ENCODE measurements at regions of chr3 and their contacts with region 1.

Region 1: GRCh38 chr3:46845791-46846623 is 17.2 kb downstream of the MYL3 start:
- DNase-seq: peak; percentile 42
- H3K4me3 Mint-ChIP-seq: peak overlapping the region; percentile 52
- H3K27ac Mint-ChIP-seq: peak overlapping the region; percentile 49
- H3K4me1 Mint-ChIP-seq: no peaks in the 10 kb centered on the region
- H3K27me3 Mint-ChIP-seq: peaks cover 41% of the 10 kb centered on the region
- CTCF ChIP-seq: peak; percentile 38

Region 2: DNA sequence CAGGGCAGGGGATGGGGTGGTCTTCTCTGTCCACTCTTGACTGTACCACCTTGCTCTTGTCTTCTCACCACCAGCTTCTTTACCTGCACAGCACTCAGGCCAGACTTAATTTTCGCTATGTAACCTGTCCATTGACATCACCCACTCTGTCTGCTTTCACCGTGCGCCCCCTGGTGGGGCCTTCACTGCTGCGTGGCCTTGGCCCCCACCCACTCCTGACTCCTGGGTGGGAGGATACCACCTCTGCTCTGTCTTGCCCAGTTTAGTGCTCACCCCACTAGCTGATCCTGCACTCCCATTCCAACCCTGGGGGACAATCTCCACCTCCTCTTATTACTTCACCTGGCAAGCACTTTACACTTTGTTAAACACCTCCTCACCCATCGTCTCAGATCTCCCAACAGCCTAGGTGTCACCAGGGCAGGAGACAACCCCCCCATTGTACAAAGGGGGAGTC is 49.2 kb after region 1 on chr3:
- CTCF ChIA-PET with region 1: no interaction called
- POLR2A ChIA-PET with region 1: no interaction called
- intact Hi-C with region 1: loop called (anchors 5 kb)
- DNase-seq: peak; percentile 59
- H3K4me3 Mint-ChIP-seq: no peak overlapping the region
- H3K27ac Mint-ChIP-seq: no peak overlapping the region
- H3K4me1 Mint-ChIP-seq: no peaks in the 10 kb centered on the region
- H3K27me3 Mint-ChIP-seq: peaks cover 15% of the 10 kb centered on the region
- CTCF ChIP-seq: peak; percentile 89

Region 3: GRCh38 chr3:46987743-46988401 is 141.9 kb after region 1 on chr3:
- CTCF ChIA-PET with region 1: no interaction called
- POLR2A ChIA-PET with region 1: no interaction called
- intact Hi-C with region 1: no loop called
- DNase-seq: peak; percentile 74
- H3K4me3 Mint-ChIP-seq: no peak overlapping the region
- H3K27ac Mint-ChIP-seq: peak overlapping the region; percentile 31
- H3K4me1 Mint-ChIP-seq: peaks cover 12% of the 10 kb centered on the region
- H3K27me3 Mint-ChIP-seq: no peaks in the 10 kb centered on the region
- CTCF ChIP-seq: no peak